Spleen (tissue), 13 donors: ENCODE measurements at regions of chr15 and their contacts with region 1.

Region 1: DNA sequence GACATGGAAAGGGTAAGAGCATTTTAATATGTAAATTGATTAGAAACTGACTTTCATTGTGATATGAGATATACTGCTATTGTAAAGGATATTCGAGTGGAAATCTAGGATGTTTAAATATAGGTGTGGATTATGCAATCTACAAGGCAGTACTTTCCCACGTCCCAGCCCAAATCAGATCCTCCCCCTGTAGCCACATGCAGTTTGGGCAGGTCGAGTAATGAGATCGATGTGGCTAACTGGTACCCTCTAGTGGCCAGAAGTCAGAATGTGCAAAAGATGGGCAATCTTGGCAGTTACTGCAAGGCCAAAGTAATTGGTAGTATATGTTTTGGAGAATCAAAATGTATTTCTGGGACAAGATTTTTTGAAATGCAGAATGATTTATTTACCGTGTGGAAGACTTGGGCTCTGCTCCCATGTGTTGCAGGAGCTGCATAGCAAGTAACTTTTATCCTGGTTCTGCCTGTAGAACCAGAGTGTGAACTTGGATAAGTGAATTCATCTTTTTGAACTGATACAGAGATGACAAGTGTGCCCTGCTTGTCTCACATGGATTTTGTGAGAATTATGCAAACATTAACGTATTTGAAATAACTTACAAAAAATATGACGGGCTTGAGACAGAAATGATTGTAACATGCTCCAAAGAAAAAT is 94.5 kb upstream of the ADAMTSL3 start:
- DNase-seq: no peak
- H3K4me3 ChIP-seq: no peak overlapping the region
- H3K27ac ChIP-seq: no peak overlapping the region
- H3K4me1 ChIP-seq: peaks cover 0 to 3% (median 0%) of the 10 kb centered on the region in 6 donors
- H3K27me3 ChIP-seq: peaks cover 0 to 10% (median 0%) of the 10 kb centered on the region in 7 donors
- CTCF ChIP-seq: peak in 10 of 11 experiments; percentile 42 to 72 (median 63)
- POLR2A ChIP-seq: no peak

Region 2: DNA sequence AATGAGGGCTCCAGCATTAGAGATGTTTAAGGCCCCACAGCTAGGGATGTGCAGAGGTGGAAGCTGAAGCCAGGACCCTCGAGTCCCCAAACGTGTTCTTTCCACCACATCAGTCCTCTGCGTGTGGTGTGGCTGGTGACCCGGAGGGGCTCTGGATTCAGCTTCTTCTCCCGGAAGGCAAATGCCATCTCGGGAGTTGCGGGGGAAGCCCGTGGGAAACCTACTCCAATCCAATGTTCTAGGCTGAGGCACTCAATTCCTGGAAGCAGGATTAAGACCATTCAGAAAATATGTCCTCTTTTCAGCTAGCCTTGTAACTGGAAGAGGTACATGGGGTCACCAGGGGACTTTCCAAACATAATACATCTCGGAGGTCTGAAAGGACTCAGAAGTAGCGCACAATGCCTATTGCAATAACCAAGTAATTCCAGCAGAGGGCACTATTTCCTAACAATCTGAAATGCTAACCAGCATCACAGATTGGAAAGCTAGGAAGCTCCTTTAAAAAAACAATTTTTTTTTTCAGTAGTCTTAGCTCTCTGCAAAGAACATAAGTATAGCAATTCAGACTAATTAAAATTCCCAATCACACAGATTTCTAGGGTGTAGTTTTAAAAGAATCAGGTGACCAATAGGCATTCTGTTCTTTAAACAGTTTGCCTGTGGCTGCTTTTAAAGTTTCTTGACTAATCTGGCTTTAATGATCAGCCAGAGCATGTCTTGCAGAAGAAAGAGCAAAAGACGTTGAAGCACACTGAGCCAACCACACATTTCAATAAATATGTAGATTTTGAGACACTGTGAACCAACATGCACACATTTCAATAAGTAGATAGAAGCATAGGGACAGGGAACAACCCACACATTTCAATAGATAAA is 311.0 kb before region 1 on chr15:
- intact Hi-C with region 1: loop called (anchors 5 kb)
- DNase-seq: no peak
- H3K4me3 ChIP-seq: no peak overlapping the region
- H3K27ac ChIP-seq: no peak overlapping the region
- H3K4me1 ChIP-seq: peaks cover 0 to 6% (median 0%) of the 10 kb centered on the region in 6 donors
- H3K27me3 ChIP-seq: peaks cover 0 to 57% (median 14%) of the 10 kb centered on the region in 7 donors
- CTCF ChIP-seq: peak; percentile 65 to 94 (median 89)
- POLR2A ChIP-seq: no peak

Region 3: DNA sequence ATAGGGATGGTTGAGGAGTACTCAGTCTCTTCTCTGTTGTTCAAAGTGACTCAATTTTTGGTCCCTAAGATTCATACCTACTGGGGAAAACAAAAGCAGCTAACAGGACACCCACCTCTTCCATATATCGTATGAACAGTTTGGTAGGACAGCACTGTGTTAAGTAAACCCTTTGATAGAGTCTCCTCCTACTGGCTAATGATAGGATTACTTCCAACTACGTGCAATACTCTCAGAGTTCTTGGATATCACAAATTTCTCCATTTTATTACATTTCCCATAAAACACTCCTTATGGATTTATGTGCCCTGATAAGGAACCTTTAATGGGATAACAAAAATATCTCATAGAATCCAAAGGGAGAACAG is 475.9 kb after region 1 on chr15:
- intact Hi-C with region 1: loop called (anchors 10 kb)
- DNase-seq: no peak
- H3K4me3 ChIP-seq: no peak overlapping the region
- H3K27ac ChIP-seq: no peak overlapping the region
- H3K4me1 ChIP-seq: no peaks in the 10 kb centered on the region
- H3K27me3 ChIP-seq: peaks cover 0 to 22% (median 0%) of the 10 kb centered on the region in 7 donors
- CTCF ChIP-seq: peak in 5 of 11 experiments; percentile 5 to 39 (median 13)
- POLR2A ChIP-seq: no peak